Posterior cingulate gyrus (tissue), 11 donors: ENCODE measurements at regions of chrX and their contacts with region 1.

Region 1: GRCh38 chrX:118603981-118604380 is 108.4 kb downstream of the DOCK11 start:
- DNase-seq: peak in 7 of 10 donors; percentile 9 to 76 (median 41)

Region 2: GRCh38 chrX:118325453-118325852 is 278.5 kb before region 1 on chrX:
- intact Hi-C with region 1: no loop called
- DNase-seq: no peak

Region 3: DNA sequence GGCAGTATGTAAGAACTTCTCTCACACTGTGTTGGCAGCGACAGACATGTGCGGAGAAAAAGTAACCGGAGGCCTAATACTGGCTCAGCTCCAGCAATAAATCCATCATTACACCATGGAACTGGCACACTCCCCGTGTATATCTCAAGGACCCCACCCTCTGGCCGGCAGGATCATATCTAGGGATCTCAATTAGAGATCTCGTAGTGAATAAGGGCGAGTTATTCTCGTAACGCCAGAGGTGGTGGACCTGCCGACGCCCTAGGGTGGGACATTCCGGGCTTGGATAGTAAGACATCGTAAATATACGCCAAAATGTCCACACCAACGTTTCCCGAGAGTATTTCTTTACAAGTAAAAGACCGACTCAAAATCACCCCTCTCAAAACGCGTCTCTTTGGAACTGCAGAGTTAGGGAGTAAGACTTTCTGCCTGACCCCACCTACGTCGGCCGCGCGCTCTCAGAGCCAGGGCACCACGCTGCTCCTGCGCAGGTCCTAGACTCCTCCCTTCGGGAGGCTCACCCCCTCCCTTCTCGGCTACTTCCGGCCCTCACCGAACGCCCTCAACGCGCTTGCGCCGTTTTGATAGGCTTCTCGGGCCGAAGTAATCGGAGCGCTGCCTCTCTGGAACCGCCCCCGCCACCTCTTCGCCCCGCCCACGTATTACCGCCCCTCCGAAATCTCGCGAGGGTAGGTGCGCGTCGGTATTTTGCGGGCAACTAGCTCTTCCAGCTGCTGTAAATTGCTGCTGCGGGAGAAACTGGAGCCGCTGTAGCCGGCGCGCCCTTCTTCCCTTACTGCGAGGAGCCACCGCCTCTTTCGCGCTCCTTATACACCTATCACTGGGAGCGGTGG is 258.4 kb before region 1 on chrX and contains the start of gene WDR44:
- intact Hi-C with region 1: loop called (anchors 5 kb)
- DNase-seq: peak; percentile 84 to 99 (median 90)

Region 4: DNA sequence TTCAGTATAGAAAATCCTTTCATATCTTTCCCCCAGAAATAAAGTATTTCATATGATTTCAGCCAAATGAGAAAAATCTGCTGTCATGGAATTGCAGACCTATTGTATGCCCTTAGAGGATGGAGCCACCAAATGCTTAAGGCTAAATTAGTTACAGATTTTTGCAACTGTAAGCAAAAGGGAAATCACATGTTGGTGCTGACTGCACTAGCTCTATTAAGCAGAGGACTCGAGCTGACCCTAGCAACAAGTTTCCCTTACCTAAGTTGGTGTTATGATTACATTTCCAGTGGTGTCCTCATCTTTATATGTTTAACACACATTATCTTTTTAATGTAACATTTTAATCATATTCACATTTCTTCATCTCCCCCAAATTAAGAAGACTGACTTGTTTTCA is 166.7 kb before region 1 on chrX:
- intact Hi-C with region 1: no loop called
- DNase-seq: no peak

Region 5: DNA sequence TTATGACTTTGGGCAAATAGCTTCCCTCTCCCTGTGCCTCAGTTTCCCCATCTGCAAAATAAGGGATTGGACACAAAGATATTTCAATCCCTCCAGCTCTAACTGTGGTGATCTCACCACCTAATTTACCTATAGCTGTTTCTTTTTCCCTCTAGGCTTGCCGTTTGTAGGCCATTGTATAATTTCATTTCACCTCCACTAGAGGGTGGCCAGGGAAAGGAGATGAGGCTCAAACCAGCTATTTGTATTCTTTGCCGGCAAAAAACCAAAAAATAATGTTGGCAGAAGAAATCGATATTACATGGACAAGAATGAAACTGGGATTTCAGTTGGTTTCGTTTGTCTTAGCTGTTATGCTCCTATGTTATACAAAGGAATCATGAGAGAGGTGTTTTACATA is 144.5 kb before region 1 on chrX:
- intact Hi-C with region 1: loop called (anchors 2 kb)
- DNase-seq: no peak

Region 6: DNA sequence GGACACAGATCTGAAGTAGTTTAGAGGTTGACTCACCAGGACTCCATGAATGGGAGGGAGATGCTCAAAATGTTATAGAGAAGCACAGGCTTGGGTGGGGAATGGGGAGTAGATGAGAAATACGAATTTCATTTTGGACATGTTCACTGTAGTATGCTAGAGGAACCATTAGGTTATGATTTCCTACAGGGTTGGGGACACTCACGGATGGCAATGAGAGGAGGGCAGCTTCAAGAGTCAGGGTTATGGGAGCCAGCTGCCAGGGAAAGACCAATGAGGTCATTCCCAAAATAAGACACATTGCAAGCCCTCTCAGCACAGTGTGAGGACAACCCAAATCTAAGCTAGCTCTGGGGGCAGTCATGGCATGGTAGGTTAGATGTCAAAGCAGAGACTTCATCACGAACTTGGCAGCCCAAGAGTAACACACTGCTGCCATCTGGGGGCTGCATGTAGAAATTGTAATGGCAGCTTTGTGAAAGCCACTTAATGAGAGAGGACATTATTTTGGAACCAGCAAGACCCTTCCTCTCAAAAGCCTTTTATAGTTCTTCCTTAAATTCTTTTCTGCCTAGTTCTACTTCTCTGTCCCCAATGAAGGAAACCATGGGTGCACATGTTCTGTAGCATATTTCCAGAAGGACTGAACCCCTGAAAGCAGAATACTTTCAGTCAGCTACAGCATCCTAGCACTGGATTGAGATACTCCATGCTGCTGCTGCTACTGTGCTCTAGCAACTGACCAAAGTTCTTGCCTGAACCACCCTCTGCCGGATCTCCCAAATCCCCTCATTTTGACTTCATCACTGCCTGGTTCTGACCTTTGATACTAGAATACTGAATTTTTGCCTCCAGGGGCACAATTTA is 203.4 kb after region 1 on chrX:
- intact Hi-C with region 1: loop called (anchors 2 kb)
- DNase-seq: peak in 5 of 10 donors; percentile 21 to 89 (median 44)